ENCODE measurements at regions of chr1 and their contacts with region 1.

Region 1: DNA sequence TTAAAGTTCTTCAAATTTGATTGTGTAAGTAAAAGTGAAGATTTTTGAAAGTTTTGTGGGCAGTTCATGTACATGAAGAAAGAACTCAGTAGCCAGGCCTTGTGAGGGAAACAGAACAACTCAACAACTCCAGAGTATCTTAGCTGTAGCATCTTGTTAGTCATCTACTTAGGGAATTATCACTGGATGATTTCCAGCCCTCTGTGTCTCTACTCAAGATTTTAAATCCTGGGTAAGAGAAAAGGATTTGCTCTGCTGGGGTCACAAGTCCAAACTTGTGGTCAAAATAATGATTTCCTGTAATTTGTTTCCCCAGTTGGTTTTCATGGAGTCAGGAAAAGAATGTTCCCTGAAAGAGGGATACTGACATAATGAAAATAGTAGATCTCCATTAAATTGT is 8.2 kb downstream of the OR10T2 start:
- DNase-seq: no peak

Region 2: DNA sequence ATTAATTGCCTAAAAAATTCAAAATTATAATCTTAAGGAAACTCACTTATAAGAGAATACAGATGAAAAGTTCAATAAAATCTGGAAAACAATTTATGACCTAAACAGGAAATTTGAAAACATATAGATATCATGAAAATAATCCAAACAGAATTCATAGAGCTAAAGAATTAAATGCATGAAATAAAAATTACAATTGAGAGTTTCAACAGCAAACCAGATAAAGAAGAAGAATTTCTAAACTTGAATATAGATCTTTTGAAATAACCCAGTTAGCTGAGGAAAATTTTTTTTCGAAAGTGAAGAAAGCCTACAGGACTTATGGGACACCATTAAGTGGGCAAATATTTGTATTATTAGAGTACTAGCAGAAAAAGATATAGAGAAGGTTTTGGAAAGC is 577.8 kb before region 1 on chr1:
- intact Hi-C with region 1: loop called in 1 of 2 experiments (anchors 5 kb)
- DNase-seq: no peak

Region 3: DNA sequence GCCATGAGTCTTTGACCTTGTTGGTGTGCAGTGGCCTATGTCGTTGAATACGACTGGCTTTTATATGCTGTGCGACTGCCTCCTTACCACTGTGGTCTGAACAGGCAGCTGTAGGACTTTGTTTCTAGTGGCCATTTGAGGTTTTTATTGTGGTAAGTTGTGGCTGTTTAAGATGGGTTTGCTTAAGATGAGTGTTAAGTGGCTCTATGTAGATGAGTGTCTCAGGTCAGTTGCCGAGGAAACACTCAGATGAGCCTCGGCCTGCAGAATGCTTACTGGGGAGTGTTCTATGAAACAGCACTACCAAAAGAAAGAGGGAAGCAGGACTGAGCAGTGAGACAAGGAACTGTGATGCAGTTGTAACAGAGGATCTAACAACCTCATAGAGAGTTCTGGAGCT is 116.3 kb before region 1 on chr1:
- intact Hi-C with region 1: no loop called
- DNase-seq: no peak

Region 4: DNA sequence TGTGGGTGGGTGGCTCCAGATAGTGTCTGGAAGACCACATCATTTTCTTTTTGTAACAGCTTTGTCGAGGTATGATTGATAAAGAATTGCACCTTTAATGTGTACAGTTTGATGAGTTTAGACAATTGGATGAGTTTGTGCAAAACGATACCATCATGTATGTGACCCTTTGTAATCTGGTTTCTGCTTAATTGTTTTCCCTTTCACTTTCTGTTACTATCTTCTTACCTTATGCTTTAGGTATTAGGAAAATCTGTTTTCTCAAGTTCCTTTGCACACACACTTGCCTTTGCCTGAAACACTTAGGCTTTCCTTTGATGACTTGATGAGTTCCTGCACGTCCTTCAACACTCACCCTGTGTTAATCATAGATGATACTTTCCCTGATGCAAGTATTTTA is 220.8 kb after region 1 on chr1:
- intact Hi-C with region 1: no loop called
- DNase-seq: no peak